ENCODE measurements at regions of chr2 and their contacts with region 1.

Region 1: GRCh38 chr2:238821391-238821790 is 26.5 kb upstream of the TWIST2 start:
- DNase-seq: no peak
- ATAC-seq: no peak
- H3K4me3 ChIP-seq: no peak overlapping the region
- H3K27ac ChIP-seq: no peak overlapping the region
- H3K4me1 ChIP-seq: no peaks in the 10 kb centered on the region
- H3K27me3 ChIP-seq: no peaks in the 10 kb centered on the region
- CTCF ChIP-seq: no peak

Region 2: DNA sequence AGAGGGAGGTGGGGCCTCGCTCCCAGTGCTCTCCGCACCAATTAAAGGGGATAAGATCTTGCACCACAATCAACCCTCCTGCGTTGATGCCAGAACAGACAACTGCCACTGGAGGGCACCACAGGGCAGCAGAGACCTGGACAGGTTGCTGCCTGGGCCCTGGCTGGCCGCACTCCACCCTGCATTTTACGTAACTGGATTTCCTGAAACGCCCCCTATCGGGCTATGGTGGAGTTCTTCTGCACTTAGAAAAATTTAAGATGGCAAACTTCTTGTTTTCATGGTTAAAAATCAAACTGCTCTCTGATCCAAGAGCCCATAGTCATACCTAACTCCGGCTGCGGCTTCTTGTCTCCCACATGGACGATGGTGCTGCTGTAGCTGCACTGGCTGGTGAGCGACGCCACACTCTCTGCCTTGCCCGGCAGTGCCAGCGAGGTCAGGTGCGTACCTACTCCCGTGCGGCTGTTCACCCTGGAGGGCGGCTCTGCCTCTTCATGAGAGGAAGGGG is 564.7 kb before region 1 on chr2:
- CTCF ChIA-PET with region 1: no interaction called
- POLR2A ChIA-PET with region 1: no interaction called
- intact Hi-C with region 1: no loop called
- DNase-seq: peak; percentile 91
- ATAC-seq: peak; percentile 94
- H3K4me3 ChIP-seq: no peak overlapping the region
- H3K27ac ChIP-seq: no peak overlapping the region
- H3K4me1 ChIP-seq: no peaks in the 10 kb centered on the region
- H3K27me3 ChIP-seq: no peaks in the 10 kb centered on the region
- CTCF ChIP-seq: peak; percentile 96

Region 3: DNA sequence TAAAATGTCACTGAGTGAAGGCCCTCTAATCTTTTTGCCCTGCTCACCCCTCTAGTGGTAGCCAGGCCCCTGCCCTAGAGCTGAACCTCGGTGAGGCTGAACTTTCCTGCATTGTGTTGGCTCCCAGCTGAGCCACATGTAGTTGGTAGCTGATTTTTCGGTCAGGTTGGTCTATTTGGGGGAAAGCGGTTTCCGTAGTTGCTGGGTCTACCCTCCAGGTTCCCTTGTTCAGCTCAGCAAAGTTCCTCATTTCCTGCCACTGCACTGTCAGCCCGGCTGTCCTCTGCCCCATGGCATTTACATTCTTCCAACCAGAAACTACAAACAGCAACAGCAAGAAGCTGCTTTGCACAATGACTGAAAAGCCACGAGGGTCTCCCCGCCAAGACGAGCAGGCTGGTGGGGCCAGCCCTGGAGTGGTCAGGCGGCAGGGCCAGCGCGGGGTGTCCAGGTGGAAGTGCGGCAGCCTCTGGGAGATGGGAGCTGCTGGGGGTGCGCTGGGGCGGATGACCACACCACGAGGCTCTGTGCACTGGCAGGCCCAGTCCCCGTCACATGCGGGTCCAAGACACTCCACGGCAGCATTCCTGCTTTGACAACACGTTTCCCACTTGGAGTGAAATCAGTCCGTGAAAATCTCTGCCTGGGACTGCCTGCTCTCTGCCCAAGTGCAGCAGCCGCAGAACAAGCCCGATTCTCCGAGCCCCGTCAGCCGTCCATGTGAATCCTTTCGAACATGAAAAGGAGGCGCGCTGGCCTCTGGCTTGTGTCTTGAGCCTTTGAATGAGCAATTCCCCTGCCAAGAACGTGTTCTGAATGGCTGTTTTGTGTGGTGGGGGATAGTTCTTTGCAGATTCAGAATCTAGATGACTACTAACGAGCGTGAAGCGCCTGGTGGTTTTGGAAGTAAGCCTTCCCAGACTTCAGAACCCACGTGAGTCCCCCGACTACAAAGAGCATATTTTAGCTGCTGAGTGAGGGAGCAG is 235.3 kb before region 1 on chr2:
- CTCF ChIA-PET with region 1: no interaction called
- POLR2A ChIA-PET with region 1: interaction called, 18 read pairs
- intact Hi-C with region 1: no loop called
- DNase-seq: no peak
- ATAC-seq: no peak
- H3K4me3 ChIP-seq: no peak overlapping the region
- H3K27ac ChIP-seq: no peak overlapping the region
- H3K4me1 ChIP-seq: no peaks in the 10 kb centered on the region
- H3K27me3 ChIP-seq: no peaks in the 10 kb centered on the region
- CTCF ChIP-seq: no peak

Measured in PC-3 (cell line).